ENCODE measurements at regions of chr20 and their contacts with region 1.

Region 1: GRCh38 chr20:49713753-49714712 is at the start of gene B4GALT5:
- DNase-seq: peak; percentile 26 to 83 (median 59)
- ATAC-seq: peak; percentile 85
- H3K4me3 ChIP-seq: peak within 1 kb of the TSS; percentile 79 to 86
- H3K4me3 Mint-ChIP-seq: peak within 1 kb of the TSS; percentile 94
- H3K27ac ChIP-seq: peak within 1 kb of the TSS; percentile 51 to 75
- H3K27ac Mint-ChIP-seq: peak within 1 kb of the TSS; percentile 87
- H3K4me1 ChIP-seq: peaks cover 32% of the 10 kb centered on the region
- H3K4me1 Mint-ChIP-seq: peaks cover 49% of the 10 kb centered on the region
- H3K27me3 ChIP-seq: no peaks in the 10 kb centered on the region
- H3K27me3 Mint-ChIP-seq: no peaks in the 10 kb centered on the region
- CTCF ChIP-seq: no peak
- total RNA-seq, gene B4GALT5: 7.8 to 7.9 TPM

Region 2: DNA sequence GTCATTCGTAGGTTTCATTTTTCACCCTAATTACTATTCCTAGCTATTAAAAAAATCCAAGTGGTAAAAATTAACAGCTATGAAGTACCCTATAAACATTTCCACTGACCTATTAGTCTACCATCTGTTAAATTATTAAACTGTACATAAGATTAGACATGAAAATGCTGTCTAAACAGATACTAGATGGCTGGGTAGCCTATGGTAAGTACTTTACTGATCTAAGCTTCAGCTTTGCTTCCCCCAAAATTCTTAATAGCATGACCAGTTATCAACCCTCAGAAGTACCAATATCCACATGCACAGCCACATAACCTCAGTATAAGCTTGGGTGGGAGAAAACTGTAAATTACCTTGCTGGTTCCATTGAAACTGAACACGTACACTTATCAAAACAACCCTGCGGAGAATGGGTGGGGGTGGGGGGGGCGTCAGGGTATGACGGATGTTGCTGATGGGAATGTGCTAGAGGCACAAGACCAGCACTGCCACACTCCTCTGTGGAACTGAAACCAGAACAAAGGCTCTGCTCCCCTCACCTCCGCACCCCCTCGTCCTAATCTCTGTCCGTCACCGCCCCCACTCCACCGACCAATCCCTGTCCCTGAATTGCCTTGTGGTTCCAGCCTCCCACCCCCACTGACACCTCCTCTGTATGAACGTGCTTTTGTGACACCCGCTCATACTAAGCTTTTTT is 45.7 kb before region 1 on chr20:
- CTCF ChIA-PET with region 1: no interaction called
- POLR2A ChIA-PET with region 1: interaction called, 4 read pairs
- intact Hi-C with region 1: loop called (anchors 1 kb)
- DNase-seq: peak; percentile 46 to 96 (median 70)
- ATAC-seq: peak; percentile 94
- H3K4me3 ChIP-seq: peak overlapping the region in 1 of 2 experiments; percentile 50
- H3K4me3 Mint-ChIP-seq: peak overlapping the region; percentile 75
- H3K27ac ChIP-seq: peak overlapping the region; percentile 24 to 87
- H3K27ac Mint-ChIP-seq: peak overlapping the region; percentile 74
- H3K4me1 ChIP-seq: peaks cover 14% of the 10 kb centered on the region
- H3K4me1 Mint-ChIP-seq: peaks cover 54% of the 10 kb centered on the region
- H3K27me3 ChIP-seq: no peaks in the 10 kb centered on the region
- H3K27me3 Mint-ChIP-seq: no peaks in the 10 kb centered on the region
- CTCF ChIP-seq: no peak

Region 3: GRCh38 chr20:49794336-49795138 is 80.5 kb after region 1 on chr20:
- CTCF ChIA-PET with region 1: no interaction called
- POLR2A ChIA-PET with region 1: no interaction called
- intact Hi-C with region 1: no loop called
- DNase-seq: peak in 3 of 9 experiments; percentile 30 to 55 (median 44)
- ATAC-seq: peak; percentile 78
- H3K4me3 ChIP-seq: no peak overlapping the region
- H3K4me3 Mint-ChIP-seq: no peak overlapping the region
- H3K27ac ChIP-seq: no peak overlapping the region
- H3K27ac Mint-ChIP-seq: peak overlapping the region; percentile 64
- H3K4me1 ChIP-seq: no peaks in the 10 kb centered on the region
- H3K4me1 Mint-ChIP-seq: peaks cover 7% of the 10 kb centered on the region
- H3K27me3 ChIP-seq: no peaks in the 10 kb centered on the region
- H3K27me3 Mint-ChIP-seq: peaks cover 15% of the 10 kb centered on the region
- CTCF ChIP-seq: no peak

Region 4: DNA sequence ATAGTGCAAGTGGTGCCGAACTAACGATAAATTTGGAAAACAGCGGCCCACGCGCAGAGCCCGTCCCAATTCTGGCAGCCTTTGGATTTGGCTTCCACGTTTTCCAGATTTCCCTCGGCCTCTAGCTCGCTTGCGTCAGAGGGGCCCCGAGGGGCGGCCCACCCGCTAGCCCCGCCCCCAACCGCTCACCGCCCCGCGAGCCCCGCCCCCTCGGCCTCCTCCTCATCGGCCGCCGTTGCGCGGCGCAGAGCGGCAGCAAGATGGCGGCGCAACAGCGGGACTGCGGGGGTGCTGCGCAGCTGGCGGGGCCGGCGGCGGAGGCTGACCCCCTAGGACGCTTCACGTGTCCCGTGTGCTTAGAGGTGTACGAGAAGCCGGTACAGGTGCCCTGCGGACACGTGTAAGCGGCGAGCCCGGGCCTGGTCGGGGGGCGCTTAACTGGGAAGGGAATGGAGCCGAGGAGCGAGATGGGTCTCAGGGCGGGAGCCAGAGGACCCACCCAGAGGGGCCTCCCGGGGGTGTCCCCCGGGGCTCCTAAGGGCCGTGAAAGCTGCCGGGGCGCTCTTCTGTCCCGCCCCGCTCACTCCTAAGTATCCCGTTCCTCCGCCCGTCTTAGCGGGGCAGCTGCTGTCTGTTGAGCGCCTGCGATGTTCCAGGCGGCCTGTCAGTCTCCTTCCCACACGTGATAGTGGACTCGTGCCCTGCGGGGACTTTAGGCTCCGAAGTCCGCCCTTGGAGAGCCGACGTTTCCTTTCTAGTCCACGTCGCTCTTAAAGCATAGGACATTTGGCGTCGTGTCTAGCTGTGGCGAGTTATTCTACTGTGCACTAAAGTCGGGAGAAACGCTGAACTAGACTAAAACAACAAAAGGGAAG is 222.4 kb after region 1 on chr20 and contains the start of gene RNF114:
- CTCF ChIA-PET with region 1: no interaction called
- POLR2A ChIA-PET with region 1: no interaction called
- intact Hi-C with region 1: loop called (anchors 2 to 5 kb)
- DNase-seq: peak; percentile 82 to 95 (median 90)
- ATAC-seq: peak; percentile 96
- H3K4me3 ChIP-seq: peak within 1 kb of the TSS; percentile 96 to 99
- H3K4me3 Mint-ChIP-seq: peak within 1 kb of the TSS; percentile 98
- H3K27ac ChIP-seq: peak within 1 kb of the TSS; percentile 89 to 95
- H3K27ac Mint-ChIP-seq: peak within 1 kb of the TSS; percentile 96
- H3K4me1 ChIP-seq: peaks cover 30% of the 10 kb centered on the region
- H3K4me1 Mint-ChIP-seq: peaks cover 46% of the 10 kb centered on the region
- H3K27me3 ChIP-seq: no peaks in the 10 kb centered on the region
- H3K27me3 Mint-ChIP-seq: no peaks in the 10 kb centered on the region
- CTCF ChIP-seq: no peak
- total RNA-seq, gene RNF114: 137 to 151 TPM